WTC11 (cell line): ENCODE measurements at regions of chr22 and their contacts with region 1.

Region 1: GRCh38 chr22:26756675-26757293 is 99.4 kb downstream of the MIAT start:
- DNase-seq: peak; percentile 73
- ATAC-seq: peak; percentile 80
- H3K4me3 Mint-ChIP-seq: peak overlapping the region; percentile 45
- H3K27ac Mint-ChIP-seq: no peak overlapping the region
- H3K4me1 Mint-ChIP-seq: peaks cover 27% of the 10 kb centered on the region
- H3K27me3 Mint-ChIP-seq: peaks cover 11% of the 10 kb centered on the region
- CTCF ChIP-seq: peak; percentile 97

Region 2: GRCh38 chr22:26143801-26144325 is 612.9 kb before region 1 on chr22:
- CTCF ChIA-PET with region 1: no interaction called
- POLR2A ChIA-PET with region 1: no interaction called
- DNase-seq: no peak
- ATAC-seq: no peak
- H3K4me3 Mint-ChIP-seq: no peak overlapping the region
- H3K27ac Mint-ChIP-seq: no peak overlapping the region
- H3K4me1 Mint-ChIP-seq: no peaks in the 10 kb centered on the region
- H3K27me3 Mint-ChIP-seq: peaks cover 3% of the 10 kb centered on the region
- CTCF ChIP-seq: no peak

Region 3: GRCh38 chr22:26804911-26805539 is 48.2 kb after region 1 on chr22:
- CTCF ChIA-PET with region 1: interaction called, 11 read pairs
- POLR2A ChIA-PET with region 1: no interaction called
- DNase-seq: no peak
- ATAC-seq: no peak
- H3K4me3 Mint-ChIP-seq: no peak overlapping the region
- H3K27ac Mint-ChIP-seq: no peak overlapping the region
- H3K4me1 Mint-ChIP-seq: peaks cover 18% of the 10 kb centered on the region
- H3K27me3 Mint-ChIP-seq: no peaks in the 10 kb centered on the region
- CTCF ChIP-seq: no peak